Left ventricle myocardium inferior (tissue), 1 donor: ENCODE measurements at regions of chr2 and their contacts with region 1.

Region 1: DNA sequence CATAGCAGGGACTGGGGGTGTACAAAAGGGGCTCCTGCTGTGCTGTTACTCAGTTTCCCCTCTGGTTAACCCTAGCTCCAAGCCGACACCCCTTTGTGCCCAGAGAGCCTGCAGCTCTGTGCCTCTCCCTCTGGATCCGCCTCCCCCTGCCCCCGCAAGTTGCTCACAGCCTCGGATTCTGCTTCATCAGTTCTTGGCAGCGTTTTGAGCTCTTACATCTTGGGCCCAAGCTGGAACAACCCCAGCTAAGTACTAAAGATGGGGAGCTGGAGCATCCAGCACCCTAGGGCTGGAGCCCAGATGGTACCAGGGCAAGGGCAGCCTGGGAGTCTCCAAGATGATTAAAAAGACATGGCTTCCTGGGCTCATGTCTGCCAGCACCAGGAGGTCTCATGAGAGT is 40.7 kb downstream of the POMC start:
- DNase-seq: no peak
- H3K4me3 ChIP-seq: no peak overlapping the region
- H3K27ac ChIP-seq: no peak overlapping the region
- H3K4me1 ChIP-seq: peaks cover 27% of the 10 kb centered on the region
- H3K27me3 ChIP-seq: no peaks in the 10 kb centered on the region
- CTCF ChIP-seq: no peak

Region 2: GRCh38 chr2:24766609-24767008 is 361.0 kb before region 1 on chr2:
- intact Hi-C with region 1: no loop called
- DNase-seq: no peak
- H3K4me3 ChIP-seq: no peak overlapping the region
- H3K27ac ChIP-seq: peak overlapping the region; percentile 38
- H3K4me1 ChIP-seq: peaks cover 22% of the 10 kb centered on the region
- H3K27me3 ChIP-seq: no peaks in the 10 kb centered on the region
- CTCF ChIP-seq: no peak

Region 3: DNA sequence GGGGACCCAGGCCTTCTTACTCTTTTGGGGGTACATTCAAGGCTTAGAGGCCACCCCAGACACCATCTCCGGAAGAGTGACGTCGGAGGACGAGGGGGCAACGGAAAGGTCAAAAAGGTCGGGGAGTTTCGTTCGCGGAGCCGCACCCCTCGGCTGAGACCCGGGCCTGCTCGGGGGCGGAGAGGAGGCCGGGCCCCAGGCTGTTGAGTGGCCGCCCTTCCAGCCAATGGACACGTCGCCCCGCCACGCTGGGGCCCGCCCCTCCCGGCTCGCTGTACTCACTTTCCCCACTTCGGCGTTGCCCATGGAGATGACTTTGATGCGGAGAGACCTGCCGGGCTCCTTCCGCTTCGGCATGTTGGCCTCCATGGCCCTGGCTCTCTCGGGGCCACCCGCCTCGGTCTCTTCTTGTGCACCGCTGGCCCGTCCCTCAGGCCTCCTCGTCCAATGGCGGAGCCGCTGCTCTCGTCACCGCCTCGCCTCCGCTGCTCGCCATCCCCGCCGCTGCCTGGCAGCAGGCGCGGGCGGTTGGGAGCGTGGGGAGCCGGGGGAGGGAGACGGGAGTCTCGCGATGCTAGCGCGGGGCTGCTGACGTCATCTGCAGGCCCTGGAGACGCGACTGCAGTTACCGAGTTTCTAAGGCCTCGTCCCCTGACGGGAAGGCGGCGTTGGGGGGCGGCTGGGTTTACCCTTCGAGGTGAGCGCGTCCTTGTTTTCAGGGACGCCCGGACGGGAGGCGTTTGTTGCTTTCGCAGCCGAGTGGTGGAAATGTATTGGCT is 155.9 kb before region 1 on chr2 and contains the start of gene DNAJC27:
- intact Hi-C with region 1: loop called (anchors 2 kb)
- DNase-seq: peak; percentile 99
- H3K4me3 ChIP-seq: peak within 1 kb of the TSS; percentile 88
- H3K27ac ChIP-seq: peak within 1 kb of the TSS; percentile 99
- H3K4me1 ChIP-seq: peaks cover 39% of the 10 kb centered on the region
- H3K27me3 ChIP-seq: no peaks in the 10 kb centered on the region
- CTCF ChIP-seq: no peak
- total RNA-seq, gene DNAJC27: 10.1 TPM